ENCODE measurements at regions of chr22 and their contacts with region 1.

Region 1: GRCh38 chr22:41524809-41525452 is 19.3 kb downstream of the POLR3H start:
- DNase-seq: no peak
- H3K4me3 ChIP-seq: peak overlapping the region in 1 of 3 donors; percentile 15
- H3K27ac ChIP-seq: peak overlapping the region; percentile 84 to 88
- H3K4me1 ChIP-seq: peaks cover 0 to 14% of the 10 kb centered on the region in 2 donors
- H3K27me3 ChIP-seq: no peaks in the 10 kb centered on the region
- CTCF ChIP-seq: no peak
- POLR2A ChIP-seq: no peak

Region 2: GRCh38 chr22:41405588-41405987 is 119.3 kb before region 1 on chr22:
- intact Hi-C with region 1: loop called (anchors 5 kb)
- DNase-seq: no peak
- H3K4me3 ChIP-seq: no peak overlapping the region
- H3K27ac ChIP-seq: no peak overlapping the region
- H3K4me1 ChIP-seq: no peaks in the 10 kb centered on the region
- H3K27me3 ChIP-seq: no peaks in the 10 kb centered on the region
- CTCF ChIP-seq: no peak
- POLR2A ChIP-seq: no peak

Region 3: GRCh38 chr22:41576877-41577276 is 51.9 kb after region 1 on chr22:
- intact Hi-C with region 1: no loop called
- DNase-seq: no peak
- H3K4me3 ChIP-seq: no peak overlapping the region
- H3K27ac ChIP-seq: no peak overlapping the region
- H3K4me1 ChIP-seq: no peaks in the 10 kb centered on the region
- H3K27me3 ChIP-seq: no peaks in the 10 kb centered on the region
- CTCF ChIP-seq: peak in 1 of 3 donors; percentile 28
- POLR2A ChIP-seq: no peak

Measured in breast epithelium (tissue), 4 donors.